Activated CD8-positive, alpha-beta memory T cell treated with anti-CD3 and anti-CD28 coated beads, Interleukin-2, amount 10 ng/mL, durations not matched to agents 7 days and 5 days (primary cell): ENCODE measurements at regions of chr1 and their contacts with region 1.

Region 1: DNA sequence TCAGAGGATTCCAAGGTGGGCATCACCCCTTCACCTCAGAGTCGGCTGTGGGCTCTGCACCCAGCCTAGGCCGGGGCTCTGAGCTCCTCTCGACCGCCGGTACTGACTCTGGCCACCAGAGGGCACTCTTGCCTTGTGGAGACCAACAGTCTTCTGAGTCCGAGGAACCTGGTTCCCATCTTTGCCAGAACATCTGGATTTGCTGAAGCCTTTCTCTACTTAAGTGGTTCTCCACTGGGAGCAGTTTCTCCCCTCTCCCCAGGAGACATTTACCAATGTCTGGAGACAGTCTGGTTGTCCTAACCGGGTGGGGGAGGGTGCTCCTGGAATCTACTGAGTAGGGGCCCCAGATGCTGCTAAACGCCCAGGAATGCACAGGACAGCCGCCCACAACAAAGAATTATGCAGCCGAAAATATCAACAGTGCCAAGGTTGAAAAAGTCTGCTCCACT is 9.4 kb downstream of the ETV3L start:
- DNase-seq: peak; percentile 89
- ATAC-seq: peak; percentile 87
- H3K4me3 Mint-ChIP-seq: no peak overlapping the region
- H3K27ac Mint-ChIP-seq: no peak overlapping the region
- H3K4me1 Mint-ChIP-seq: no peaks in the 10 kb centered on the region
- H3K27me3 Mint-ChIP-seq: peaks cover 2% of the 10 kb centered on the region

Region 2: DNA sequence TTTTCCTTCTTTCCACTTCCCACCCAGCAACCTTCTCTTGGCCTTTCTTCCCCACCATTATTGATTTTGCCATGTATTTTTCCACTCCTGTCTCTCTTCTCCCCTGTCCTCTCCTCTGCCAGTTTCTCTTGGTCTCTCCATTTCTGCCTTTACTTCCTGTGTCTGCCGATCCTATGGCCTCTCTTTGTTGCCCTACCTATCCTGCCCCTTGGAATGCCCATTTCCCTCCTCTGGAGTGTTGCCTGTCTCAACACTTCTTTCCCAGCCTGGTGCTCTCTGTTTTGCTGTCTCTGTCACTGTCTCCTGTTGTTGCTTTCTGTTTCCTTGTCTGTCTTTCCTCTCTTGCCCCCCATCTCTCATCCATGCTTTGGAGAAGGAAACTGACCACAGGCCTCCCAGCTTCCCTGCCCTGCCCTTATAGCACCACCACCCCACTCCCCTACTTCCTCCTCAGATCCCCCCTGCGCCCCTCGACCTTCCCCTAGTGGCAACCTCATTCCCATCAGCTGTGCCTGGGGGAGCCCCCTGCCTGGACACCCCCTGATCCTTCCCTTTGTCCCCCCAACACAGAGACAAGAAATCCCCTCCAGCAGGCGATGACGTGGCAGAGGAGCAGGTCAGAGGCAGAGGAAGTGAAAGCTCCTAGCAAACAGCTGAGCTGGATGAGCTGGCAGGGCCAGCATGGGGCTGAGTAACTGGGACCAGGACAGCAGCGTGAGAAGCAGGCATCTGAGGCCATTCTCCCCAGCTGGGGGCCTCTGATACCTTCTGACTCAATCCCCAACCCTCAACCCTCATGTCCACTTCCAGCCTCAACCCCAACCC is 16.0 kb after region 1 on chr1:
- CTCF ChIA-PET with region 1: interaction called, 12 read pairs
- DNase-seq: peak; percentile 73
- ATAC-seq: peak; percentile 89
- H3K4me3 Mint-ChIP-seq: no peak overlapping the region
- H3K27ac Mint-ChIP-seq: no peak overlapping the region
- H3K4me1 Mint-ChIP-seq: peaks cover 12% of the 10 kb centered on the region
- H3K27me3 Mint-ChIP-seq: peaks cover 53% of the 10 kb centered on the region

Region 3: DNA sequence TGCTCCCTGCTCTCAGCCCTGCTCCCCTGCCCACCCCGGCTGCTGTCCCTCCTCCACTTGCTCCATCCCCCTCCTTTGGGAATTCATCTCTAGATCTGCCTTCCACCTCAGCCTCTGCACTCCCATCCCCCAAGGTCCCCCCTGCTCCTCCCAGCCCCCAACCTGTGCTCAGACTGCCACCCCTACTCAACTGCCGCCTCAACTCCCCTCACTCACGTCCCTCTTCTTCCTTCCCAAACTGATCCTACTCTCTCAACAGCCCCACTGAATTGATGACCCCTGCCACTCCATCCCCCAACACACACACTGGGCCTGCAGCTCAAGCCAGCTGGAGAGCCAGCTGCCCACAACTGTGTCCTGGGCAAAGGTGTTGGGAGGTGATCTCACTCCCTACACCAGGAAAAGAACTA is 25.2 kb after region 1 on chr1:
- CTCF ChIA-PET with region 1: interaction called, 12 read pairs
- DNase-seq: no peak
- ATAC-seq: no peak
- H3K4me3 Mint-ChIP-seq: no peak overlapping the region
- H3K27ac Mint-ChIP-seq: no peak overlapping the region
- H3K4me1 Mint-ChIP-seq: no peaks in the 10 kb centered on the region
- H3K27me3 Mint-ChIP-seq: peaks cover 11% of the 10 kb centered on the region

Region 4: GRCh38 chr1:157138220-157139051 is 48.2 kb after region 1 on chr1 and contains the start of gene ETV3:
- CTCF ChIA-PET with region 1: interaction called, 81 read pairs
- DNase-seq: peak; percentile 95
- ATAC-seq: peak; percentile 92
- H3K4me3 Mint-ChIP-seq: peak within 1 kb of the TSS; percentile 97
- H3K27ac Mint-ChIP-seq: peak within 1 kb of the TSS; percentile 86
- H3K4me1 Mint-ChIP-seq: peaks cover 64% of the 10 kb centered on the region
- H3K27me3 Mint-ChIP-seq: no peaks in the 10 kb centered on the region
- total RNA-seq, gene ETV3: 27.8 to 32.8 TPM

Region 5: DNA sequence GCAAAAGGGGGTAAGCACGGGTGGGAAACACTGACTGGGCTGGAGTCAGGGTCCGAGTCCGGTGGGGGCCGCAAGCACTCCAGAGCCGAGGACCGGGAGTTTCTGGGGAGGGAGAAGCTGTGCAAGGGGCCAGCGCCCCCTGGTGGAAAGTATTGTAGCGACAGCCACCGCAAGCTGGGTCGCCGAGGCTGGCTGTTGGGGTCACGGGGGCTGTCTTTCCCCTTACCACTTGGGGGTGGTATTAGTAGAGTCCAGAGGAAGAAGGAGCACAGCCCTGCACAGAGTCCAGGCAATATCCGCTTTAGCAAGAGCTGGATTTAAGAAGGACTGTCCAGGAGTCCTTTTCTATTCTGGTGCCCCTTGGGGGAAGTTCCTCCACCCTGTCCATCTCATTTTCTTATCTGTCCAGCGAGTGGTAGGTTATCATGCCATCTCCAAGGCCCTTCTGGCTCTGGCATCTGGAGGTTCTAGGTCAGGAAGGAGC is 65.9 kb after region 1 on chr1:
- CTCF ChIA-PET with region 1: interaction called, 575 read pairs
- DNase-seq: peak; percentile 81
- ATAC-seq: peak; percentile 86
- H3K4me3 Mint-ChIP-seq: no peak overlapping the region
- H3K27ac Mint-ChIP-seq: peak overlapping the region; percentile 33
- H3K4me1 Mint-ChIP-seq: peaks cover 23% of the 10 kb centered on the region
- H3K27me3 Mint-ChIP-seq: peaks cover 23% of the 10 kb centered on the region

Region 6: GRCh38 chr1:157163273-157164127 is 73.3 kb after region 1 on chr1:
- CTCF ChIA-PET with region 1: interaction called, 575 read pairs
- DNase-seq: peak; percentile 82
- ATAC-seq: peak; percentile 74
- H3K4me3 Mint-ChIP-seq: peak overlapping the region; percentile 18
- H3K27ac Mint-ChIP-seq: no peak overlapping the region
- H3K4me1 Mint-ChIP-seq: peaks cover 3% of the 10 kb centered on the region
- H3K27me3 Mint-ChIP-seq: peaks cover 13% of the 10 kb centered on the region